PC-3 (cell line): ENCODE measurements at regions of chr7 and their contacts with region 1.

Region 1: GRCh38 chr7:30142710-30143109 is 7.9 kb downstream of the MTURN start:
- DNase-seq: peak; percentile 93
- ATAC-seq: peak; percentile 76
- H3K4me3 ChIP-seq: peak overlapping the region; percentile 49
- H3K27ac ChIP-seq: peak overlapping the region; percentile 68
- H3K4me1 ChIP-seq: peaks cover 33% of the 10 kb centered on the region
- H3K27me3 ChIP-seq: no peaks in the 10 kb centered on the region
- CTCF ChIP-seq: no peak

Region 2: GRCh38 chr7:30091491-30091912 is 51.2 kb before region 1 on chr7:
- CTCF ChIA-PET with region 1: interaction called, 3 read pairs
- POLR2A ChIA-PET with region 1: interaction called, 4 read pairs
- intact Hi-C with region 1: loop called (anchors 2 kb)
- DNase-seq: peak; percentile 85
- ATAC-seq: peak; percentile 94
- H3K4me3 ChIP-seq: no peak overlapping the region
- H3K27ac ChIP-seq: peak overlapping the region; percentile 25
- H3K4me1 ChIP-seq: peaks cover 21% of the 10 kb centered on the region
- H3K27me3 ChIP-seq: no peaks in the 10 kb centered on the region
- CTCF ChIP-seq: no peak